ENCODE measurements at regions of chr22 and their contacts with region 1.

Region 1: GRCh38 chr22:41403532-41404318 is 22.0 kb downstream of the TEF start:
- DNase-seq: peak; percentile 91
- ATAC-seq: peak; percentile 96
- H3K4me3 Mint-ChIP-seq: no peak overlapping the region
- H3K27ac Mint-ChIP-seq: no peak overlapping the region
- H3K4me1 Mint-ChIP-seq: peaks cover 19% of the 10 kb centered on the region
- H3K27me3 Mint-ChIP-seq: no peaks in the 10 kb centered on the region
- CTCF ChIP-seq: peak; percentile 91

Region 2: GRCh38 chr22:41381329-41382097 is 22.2 kb before region 1 on chr22 and contains the start of gene TEF:
- CTCF ChIA-PET with region 1: interaction called, 22 read pairs
- POLR2A ChIA-PET with region 1: interaction called, 4 read pairs
- intact Hi-C with region 1: no loop called
- DNase-seq: peak; percentile 99
- ATAC-seq: peak; percentile 90
- H3K4me3 Mint-ChIP-seq: peak within 1 kb of the TSS; percentile 85
- H3K27ac Mint-ChIP-seq: peak within 1 kb of the TSS; percentile 96
- H3K4me1 Mint-ChIP-seq: peaks cover 16% of the 10 kb centered on the region
- H3K27me3 Mint-ChIP-seq: no peaks in the 10 kb centered on the region
- CTCF ChIP-seq: no peak
- total RNA-seq, gene TEF: 1.4 to 2.0 TPM

Region 3: GRCh38 chr22:41417622-41418390 is 14.1 kb after region 1 on chr22:
- CTCF ChIA-PET with region 1: interaction called, 12 read pairs
- POLR2A ChIA-PET with region 1: no interaction called
- intact Hi-C with region 1: no loop called
- DNase-seq: no peak
- ATAC-seq: no peak
- H3K4me3 Mint-ChIP-seq: no peak overlapping the region
- H3K27ac Mint-ChIP-seq: peak overlapping the region; percentile 69
- H3K4me1 Mint-ChIP-seq: peaks cover 11% of the 10 kb centered on the region
- H3K27me3 Mint-ChIP-seq: no peaks in the 10 kb centered on the region
- CTCF ChIP-seq: no peak

Region 4: DNA sequence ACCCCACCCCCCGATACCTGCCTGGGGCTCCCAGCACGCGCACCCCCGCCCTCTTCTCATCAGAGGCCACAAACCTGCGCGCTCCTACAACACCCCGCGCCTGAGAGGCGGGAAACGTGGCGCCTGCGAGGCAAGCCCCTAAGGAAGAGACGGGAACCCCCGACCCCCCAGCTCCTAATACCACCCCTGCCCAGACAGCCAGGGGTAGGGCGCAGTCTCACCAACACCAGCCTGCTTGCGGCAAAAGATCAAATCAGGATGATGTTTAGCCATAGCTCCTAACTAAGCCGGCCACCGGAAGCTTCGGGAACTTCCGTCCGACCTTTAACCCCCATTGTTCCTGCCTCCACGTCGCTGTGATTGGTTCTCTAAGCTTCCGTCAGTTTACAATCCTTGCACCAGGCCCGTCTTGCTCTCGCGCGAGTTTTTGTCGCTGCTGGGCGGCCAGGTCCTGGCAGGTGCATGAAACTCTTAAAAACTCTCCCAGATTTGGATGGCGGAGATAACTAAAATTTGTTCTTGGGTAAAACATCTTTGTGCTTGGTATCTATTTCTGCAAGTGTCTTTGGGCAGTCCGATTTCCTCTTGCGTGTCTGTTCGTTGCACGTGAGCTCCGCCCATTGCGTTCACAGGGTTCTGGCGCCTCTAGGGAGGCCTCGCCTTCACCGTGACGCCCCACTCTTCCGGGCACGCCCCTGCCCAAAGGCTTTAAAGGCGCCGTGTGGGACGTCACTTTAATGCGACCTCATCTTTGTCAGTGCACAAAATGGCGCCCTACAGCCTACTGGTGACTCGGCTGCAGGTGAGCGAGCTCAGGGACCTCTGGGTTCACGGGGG is 64.9 kb after region 1 on chr22 and contains the starts of genes ACO2 and PHF5A:
- CTCF ChIA-PET with region 1: interaction called, 22 read pairs
- POLR2A ChIA-PET with region 1: interaction called, 8 read pairs
- intact Hi-C with region 1: no loop called
- DNase-seq: peak; percentile 98
- ATAC-seq: peak; percentile 95
- H3K4me3 Mint-ChIP-seq: peak within 1 kb of the TSS; percentile 87
- H3K27ac Mint-ChIP-seq: peak within 1 kb of the TSS; percentile 98
- H3K4me1 Mint-ChIP-seq: peaks cover 56% of the 10 kb centered on the region
- H3K27me3 Mint-ChIP-seq: no peaks in the 10 kb centered on the region
- CTCF ChIP-seq: no peak
- total RNA-seq, gene ACO2: 96.5 to 97.7 TPM
- total RNA-seq, gene PHF5A: 65.2 to 70.4 TPM

Region 5: DNA sequence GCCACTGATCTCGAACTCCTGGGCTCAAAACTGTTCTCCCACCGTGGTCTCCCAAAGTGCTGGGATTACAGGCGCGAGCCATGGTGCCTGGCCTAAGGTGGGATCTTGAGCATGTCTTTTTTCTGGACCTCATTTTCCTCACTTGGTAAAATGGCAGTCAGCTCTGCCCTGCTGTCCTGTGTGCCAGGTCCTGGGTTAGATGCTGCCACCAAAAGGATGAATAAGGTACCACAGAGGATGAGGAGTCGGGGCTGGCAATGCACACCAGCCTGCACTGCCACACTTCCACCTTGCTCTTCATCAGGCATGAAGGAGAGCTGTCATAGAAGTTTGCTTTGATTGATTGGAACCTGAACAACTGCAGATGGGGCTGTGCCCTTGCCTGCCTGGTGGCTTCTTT is 97.5 kb after region 1 on chr22:
- CTCF ChIA-PET with region 1: interaction called, 48 read pairs
- POLR2A ChIA-PET with region 1: interaction called, 8 read pairs
- intact Hi-C with region 1: no loop called
- DNase-seq: peak; percentile 46
- ATAC-seq: peak; percentile 85
- H3K4me3 Mint-ChIP-seq: no peak overlapping the region
- H3K27ac Mint-ChIP-seq: no peak overlapping the region
- H3K4me1 Mint-ChIP-seq: no peaks in the 10 kb centered on the region
- H3K27me3 Mint-ChIP-seq: no peaks in the 10 kb centered on the region
- CTCF ChIP-seq: peak; percentile 43

Region 6: DNA sequence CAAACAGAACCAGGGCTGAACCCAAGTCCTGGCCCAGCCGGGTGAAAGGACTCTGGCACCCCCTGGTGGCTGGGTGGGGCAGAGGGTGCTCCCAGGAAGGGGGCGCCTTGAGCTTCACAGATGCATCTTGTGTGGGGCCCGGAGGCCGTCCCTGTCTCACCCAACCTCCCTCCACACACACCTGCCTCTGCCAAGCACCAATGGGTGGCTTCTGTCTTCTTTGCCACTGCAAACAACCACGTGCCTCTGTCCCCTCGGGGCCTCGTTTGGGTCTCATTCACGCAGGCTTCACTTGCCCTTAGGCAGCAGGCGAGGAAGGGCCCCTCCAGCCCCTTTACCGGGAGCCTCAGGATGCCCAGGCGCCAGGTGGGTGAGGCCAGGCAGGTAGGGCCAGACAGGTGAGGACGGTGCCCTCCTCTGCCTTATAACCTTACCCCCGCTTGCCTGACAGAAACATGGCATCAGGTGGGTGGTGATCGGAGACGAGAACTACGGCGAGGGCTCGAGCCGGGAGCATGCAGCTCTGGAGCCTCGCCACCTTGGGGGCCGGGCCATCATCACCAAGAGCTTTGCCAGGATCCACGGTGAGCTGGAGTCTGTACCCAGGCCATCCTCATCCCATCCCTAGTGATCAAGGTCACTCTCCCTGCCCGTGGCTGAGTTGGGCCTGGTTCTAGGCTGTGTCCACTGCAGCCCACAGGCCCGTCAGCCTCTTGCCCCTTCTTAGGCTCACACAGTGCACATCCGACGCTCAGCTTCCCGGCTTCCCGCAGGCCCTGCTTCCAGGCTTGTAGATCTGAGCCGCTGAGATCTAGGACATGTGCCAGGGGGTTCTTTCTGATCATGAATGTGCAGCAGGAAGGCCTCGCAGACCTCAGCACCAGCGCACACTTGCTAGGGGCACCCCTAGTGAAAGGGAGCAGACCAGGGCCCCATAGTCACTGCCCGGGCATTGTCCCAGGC is 123.4 kb after region 1 on chr22:
- CTCF ChIA-PET with region 1: interaction called, 106 read pairs
- POLR2A ChIA-PET with region 1: interaction called, 3 read pairs
- intact Hi-C with region 1: loop called (anchors 5 kb)
- DNase-seq: peak; percentile 70
- ATAC-seq: peak; percentile 74
- H3K4me3 Mint-ChIP-seq: no peak overlapping the region
- H3K27ac Mint-ChIP-seq: peak overlapping the region; percentile 71
- H3K4me1 Mint-ChIP-seq: peaks cover 16% of the 10 kb centered on the region
- H3K27me3 Mint-ChIP-seq: no peaks in the 10 kb centered on the region
- CTCF ChIP-seq: peak; percentile 78